Dorsolateral prefrontal cortex (tissue), 120 donors: ENCODE measurements at regions of chr14 and their contacts with region 1.

Region 1: GRCh38 chr14:102973706-102974285 is 51.3 kb downstream of the AMN start:
- DNase-seq: peak in 3 of 10 donors; percentile 41 to 72 (median 55)
- H3K4me3 ChIP-seq: no peak overlapping the region
- H3K27ac ChIP-seq: peak overlapping the region in 11 of 59 donors; percentile 8 to 62 (median 36)
- H3K27me3 ChIP-seq: no peaks in the 10 kb centered on the region
- CTCF ChIP-seq: no peak

Region 2: GRCh38 chr14:102928412-102929240 is 45.2 kb before region 1 on chr14:
- intact Hi-C with region 1: no loop called
- DNase-seq: no peak
- H3K4me3 ChIP-seq: peak overlapping the region; percentile 8 to 64 (median 36)
- H3K27ac ChIP-seq: no peak overlapping the region
- H3K27me3 ChIP-seq: peaks cover 0 to 69% (median 52%) of the 10 kb centered on the region in 45 donors
- CTCF ChIP-seq: no peak

Region 3: GRCh38 chr14:103078093-103078749 is 104.4 kb after region 1 on chr14:
- intact Hi-C with region 1: loop called in 1 of 2 experiments (anchors 5 kb)
- DNase-seq: peak; percentile 72 to 83 (median 80)
- H3K4me3 ChIP-seq: no peak overlapping the region
- H3K27ac ChIP-seq: no peak overlapping the region
- H3K27me3 ChIP-seq: peaks cover 0 to 2% (median 0%) of the 10 kb centered on the region in 45 donors
- CTCF ChIP-seq: peak in 55 of 56 donors; percentile 16 to 79 (median 68)